ENCODE measurements at regions of chrX and their contacts with region 1.

Region 1: GRCh38 chrX:5718651-5719050 is 510.0 kb downstream of the NLGN4X start:
- DNase-seq: no peak
- H3K4me3 ChIP-seq: no peak overlapping the region
- H3K27ac ChIP-seq: no peak overlapping the region
- H3K4me1 ChIP-seq: no peaks in the 10 kb centered on the region
- H3K27me3 ChIP-seq: no peaks in the 10 kb centered on the region
- CTCF ChIP-seq: no peak
- EP300 ChIP-seq: no peak
- POLR2A ChIP-seq: no peak

Region 2: DNA sequence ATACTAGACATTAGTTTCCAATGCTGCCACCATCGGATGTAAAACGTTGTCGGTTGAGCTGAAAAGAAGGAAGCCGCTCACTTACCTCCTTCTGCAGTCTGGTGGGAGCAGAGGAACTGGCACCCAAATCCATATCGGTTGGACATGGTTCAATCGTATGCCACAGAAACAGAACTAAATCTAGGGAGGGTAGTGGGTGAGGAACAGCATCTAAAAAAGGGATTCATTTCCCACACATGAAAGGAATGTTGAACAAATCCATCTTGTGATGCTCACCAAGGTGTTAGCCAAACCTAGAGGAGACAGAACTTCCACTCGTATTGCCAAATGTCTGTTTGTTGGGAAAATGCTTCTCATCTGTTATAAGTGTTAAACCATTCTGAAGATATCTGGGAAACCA is 22.7 kb before region 1 on chrX:
- intact Hi-C with region 1: loop called in 1 of 4 experiments (anchors 1 kb)
- DNase-seq: no peak
- H3K4me3 ChIP-seq: no peak overlapping the region
- H3K27ac ChIP-seq: no peak overlapping the region
- H3K4me1 ChIP-seq: no peaks in the 10 kb centered on the region
- H3K27me3 ChIP-seq: no peaks in the 10 kb centered on the region
- CTCF ChIP-seq: no peak
- EP300 ChIP-seq: no peak
- POLR2A ChIP-seq: no peak

Measured in ovary (tissue), 10 donors.